AG04450 (cell line): ENCODE measurements at regions of chr10 and their contacts with region 1.

Region 1: DNA sequence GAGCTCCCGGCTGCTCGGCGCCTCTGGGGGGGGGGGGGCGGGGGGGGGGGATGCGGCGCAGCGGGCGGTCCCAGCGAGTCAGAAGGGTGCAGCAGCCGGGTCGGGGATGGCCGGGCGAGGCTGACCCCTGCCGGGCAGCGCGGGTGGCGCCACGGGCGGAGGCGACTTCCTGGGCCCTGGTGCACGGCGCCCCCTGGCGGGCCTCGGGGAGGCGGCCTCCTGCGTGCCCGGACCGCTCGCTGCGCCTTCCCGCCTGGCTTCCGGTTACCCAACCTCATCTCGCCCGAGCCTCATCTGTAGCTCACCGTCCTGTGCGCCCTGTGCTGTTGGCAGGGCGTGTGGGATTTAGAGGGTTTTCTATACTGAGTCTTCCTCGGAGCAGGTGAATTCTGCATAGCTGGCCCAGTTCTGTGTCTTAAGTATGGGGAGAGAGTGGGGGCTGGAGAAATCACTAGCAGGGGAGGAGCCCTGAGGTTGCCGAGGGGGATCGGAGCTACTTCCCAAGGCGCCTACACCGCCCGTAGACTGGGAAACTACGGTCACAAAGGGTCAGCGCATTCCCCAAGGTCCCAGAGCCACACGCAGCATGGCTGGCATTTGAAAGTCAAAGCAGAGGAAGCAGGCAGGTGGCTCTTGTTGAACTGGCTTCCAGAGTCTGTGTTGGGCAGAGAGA is 28.3 kb upstream of the WDFY4 start:
- DNase-seq: peak; percentile 78
- H3K4me3 ChIP-seq: peak overlapping the region; percentile 64
- H3K27ac ChIP-seq: peak overlapping the region; percentile 11
- H3K27me3 ChIP-seq: peaks cover 3% of the 10 kb centered on the region
- CTCF ChIP-seq: peak; percentile 83

Region 2: GRCh38 chr10:48406204-48406603 is 250.2 kb before region 1 on chr10:
- CTCF ChIA-PET with region 1: interaction called, 12 read pairs
- POLR2A ChIA-PET with region 1: no interaction called
- DNase-seq: no peak
- H3K4me3 ChIP-seq: no peak overlapping the region
- H3K27ac ChIP-seq: no peak overlapping the region
- H3K27me3 ChIP-seq: no peaks in the 10 kb centered on the region
- CTCF ChIP-seq: no peak

Region 3: GRCh38 chr10:48478980-48479811 is 177.2 kb before region 1 on chr10:
- CTCF ChIA-PET with region 1: no interaction called
- POLR2A ChIA-PET with region 1: no interaction called
- DNase-seq: no peak
- H3K4me3 ChIP-seq: no peak overlapping the region
- H3K27ac ChIP-seq: no peak overlapping the region
- H3K27me3 ChIP-seq: no peaks in the 10 kb centered on the region
- CTCF ChIP-seq: no peak

Region 4: DNA sequence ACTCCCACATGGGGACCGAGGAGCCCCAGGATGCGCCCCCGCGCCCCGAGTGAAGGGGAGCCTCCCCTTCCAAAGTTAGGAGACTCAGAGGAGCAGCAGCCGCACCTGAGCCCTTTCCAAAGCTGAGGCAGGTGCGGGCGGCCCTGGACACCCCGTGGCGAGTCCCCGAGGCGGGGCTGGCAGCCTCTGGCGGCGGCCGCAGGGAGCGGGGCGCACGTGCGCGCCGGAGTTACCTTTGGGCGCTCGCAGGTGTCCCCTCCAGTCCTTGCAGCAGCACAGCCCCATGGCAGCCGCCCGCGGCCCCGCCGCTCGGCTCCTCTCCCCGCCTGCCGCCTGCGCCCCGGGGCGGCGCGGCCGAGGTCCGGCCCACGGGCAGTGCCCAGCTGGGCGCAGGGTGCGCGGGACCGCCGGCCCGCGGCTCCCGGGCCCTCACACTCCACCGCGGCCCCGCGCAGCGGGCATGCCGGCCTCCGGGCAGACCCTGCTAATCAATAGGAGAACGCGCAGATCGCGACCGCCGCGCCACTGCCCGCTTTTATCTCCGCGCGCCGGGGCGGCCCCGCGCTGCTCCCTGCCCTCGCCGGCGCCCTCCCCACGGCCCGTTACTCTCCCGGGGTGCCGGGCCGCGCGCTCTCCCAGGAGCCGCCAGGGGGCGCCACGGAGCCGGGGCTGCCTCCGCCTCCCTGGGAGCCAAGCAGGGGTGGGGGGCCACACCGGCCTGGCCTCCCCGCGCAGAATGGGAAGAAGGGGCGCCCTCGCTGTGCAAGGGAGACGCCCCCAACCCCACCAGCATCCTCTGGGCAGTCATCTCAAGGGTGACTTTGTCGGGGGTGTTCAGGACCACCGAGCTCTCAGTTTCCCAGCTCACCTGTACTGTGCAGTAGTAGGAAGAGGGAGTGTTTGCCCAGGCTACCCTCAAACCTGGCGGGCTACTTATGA is 132.3 kb before region 1 on chr10:
- CTCF ChIA-PET with region 1: interaction called, 34 read pairs
- POLR2A ChIA-PET with region 1: interaction called, 3 read pairs
- DNase-seq: no peak
- H3K4me3 ChIP-seq: peak overlapping the region; percentile 58
- H3K27ac ChIP-seq: no peak overlapping the region
- H3K27me3 ChIP-seq: no peaks in the 10 kb centered on the region
- CTCF ChIP-seq: peak; percentile 45; the same call in 1 of the 2 replicates

Region 5: DNA sequence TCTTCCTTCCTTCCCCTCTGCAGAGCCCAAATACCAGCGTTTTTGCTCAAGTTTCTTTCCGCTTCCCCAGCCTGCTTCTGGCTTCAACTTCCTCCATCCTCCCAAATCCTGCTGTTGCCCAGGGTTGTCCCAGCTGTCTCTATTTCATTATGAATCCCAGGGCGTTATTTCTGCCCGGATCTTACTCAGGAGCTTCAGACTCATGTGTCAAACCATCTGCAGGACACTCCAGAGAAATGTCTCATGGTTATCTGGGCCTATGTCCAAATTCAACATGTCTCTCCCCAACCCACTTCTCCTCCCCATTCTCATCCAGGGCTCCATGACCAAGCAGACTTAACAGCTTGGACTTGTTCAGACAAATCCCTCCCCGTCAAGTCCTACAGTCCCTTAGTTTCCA is 67.1 kb before region 1 on chr10:
- CTCF ChIA-PET with region 1: interaction called, 53 read pairs
- POLR2A ChIA-PET with region 1: interaction called, 5 read pairs
- DNase-seq: peak; percentile 78
- H3K4me3 ChIP-seq: no peak overlapping the region
- H3K27ac ChIP-seq: peak overlapping the region; percentile 89
- H3K27me3 ChIP-seq: no peaks in the 10 kb centered on the region
- CTCF ChIP-seq: no peak

Region 6: GRCh38 chr10:48645600-48645999 is 10.8 kb before region 1 on chr10:
- CTCF ChIA-PET with region 1: interaction called, 141 read pairs
- POLR2A ChIA-PET with region 1: interaction called, 3 read pairs
- DNase-seq: no peak
- H3K4me3 ChIP-seq: no peak overlapping the region
- H3K27ac ChIP-seq: no peak overlapping the region
- H3K27me3 ChIP-seq: no peaks in the 10 kb centered on the region
- CTCF ChIP-seq: no peak

Region 7: DNA sequence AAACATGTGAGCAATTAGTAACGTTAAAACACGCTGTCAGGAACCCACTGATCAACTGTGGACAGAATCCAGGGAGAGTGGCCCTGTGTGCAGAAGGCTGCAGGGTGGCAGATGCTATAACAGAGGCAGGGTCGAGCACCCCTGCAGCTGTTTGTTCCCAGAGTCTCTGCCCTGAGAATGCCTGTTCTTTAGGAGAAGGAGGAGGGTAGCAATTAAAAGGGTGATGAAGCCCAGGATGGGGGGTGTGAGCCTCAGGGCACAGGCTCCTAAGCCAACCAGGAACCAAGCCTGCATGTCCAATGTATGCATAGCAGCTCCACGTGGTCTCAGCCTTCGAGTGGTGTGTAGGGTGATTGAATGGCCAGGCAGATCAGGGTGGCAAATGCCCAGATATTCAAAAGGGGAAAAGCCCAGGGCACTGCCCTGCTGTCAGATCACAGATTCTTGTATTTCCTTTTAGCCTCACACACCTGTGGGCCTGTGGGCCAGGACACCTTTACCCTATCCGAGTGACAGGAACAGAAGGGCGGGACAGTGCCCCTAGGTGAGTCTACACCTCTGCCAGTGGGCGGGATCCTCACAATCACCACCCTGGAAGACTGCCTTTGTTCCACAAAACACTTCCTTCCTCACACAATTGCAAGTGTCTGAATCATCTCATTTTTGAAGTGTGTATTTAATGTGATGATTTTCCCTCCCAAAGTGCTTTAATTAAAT is 35.6 kb after region 1 on chr10:
- CTCF ChIA-PET with region 1: no interaction called
- POLR2A ChIA-PET with region 1: no interaction called
- DNase-seq: no peak
- H3K4me3 ChIP-seq: no peak overlapping the region
- H3K27ac ChIP-seq: no peak overlapping the region
- H3K27me3 ChIP-seq: peaks cover 6% of the 10 kb centered on the region
- CTCF ChIP-seq: no peak

Region 8: GRCh38 chr10:49512121-49512809 is 855.9 kb after region 1 on chr10:
- CTCF ChIA-PET with region 1: interaction called, 127 read pairs
- POLR2A ChIA-PET with region 1: no interaction called
- DNase-seq: no peak
- H3K4me3 ChIP-seq: no peak overlapping the region
- H3K27ac ChIP-seq: no peak overlapping the region
- H3K27me3 ChIP-seq: no peaks in the 10 kb centered on the region
- CTCF ChIP-seq: peak; percentile 75